ENCODE measurements at regions of chr13 and their contacts with region 1.

Region 1: DNA sequence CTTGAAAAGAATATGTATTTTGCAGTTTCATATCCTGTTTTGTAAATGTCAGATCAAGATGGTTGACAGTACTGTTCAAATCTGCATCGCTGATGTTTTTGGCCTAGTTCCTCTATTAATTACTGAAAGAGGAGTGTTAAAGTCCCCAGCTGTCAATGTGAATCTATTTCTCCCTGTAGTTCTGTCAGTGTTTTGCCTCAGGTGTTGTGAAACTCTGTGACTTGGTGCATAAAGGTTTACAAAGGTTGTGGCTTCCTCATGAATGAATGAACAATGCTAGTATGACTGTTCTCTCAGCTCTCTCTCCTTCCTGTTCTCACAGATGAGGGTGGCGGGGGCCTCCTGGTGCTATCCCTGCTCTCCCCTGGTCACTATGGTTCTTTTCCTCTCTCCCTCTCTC is 142.4 kb downstream of the MYCBP2 start:
- DNase-seq: no peak
- H3K4me3 ChIP-seq: no peak overlapping the region
- H3K4me3 Mint-ChIP-seq: peak overlapping the region in 1 of 8 donors; percentile 1
- H3K27ac ChIP-seq: no peak overlapping the region
- H3K27ac Mint-ChIP-seq: peak overlapping the region in 5 of 7 donors; percentile 16 to 90 (median 71)
- H3K4me1 ChIP-seq: peaks cover 15% of the 10 kb centered on the region
- H3K4me1 Mint-ChIP-seq: peaks cover 11 to 17% (median 14%) of the 10 kb centered on the region in 4 donors
- H3K27me3 ChIP-seq: no peaks in the 10 kb centered on the region
- H3K27me3 Mint-ChIP-seq: no peaks in the 10 kb centered on the region

Region 2: GRCh38 chr13:76735641-76736040 is 448.8 kb before region 1 on chr13:
- CTCF ChIA-PET with region 1: no interaction called
- POLR2A ChIA-PET with region 1: no interaction called
- intact Hi-C with region 1: no loop called
- DNase-seq: no peak
- H3K4me3 ChIP-seq: no peak overlapping the region
- H3K4me3 Mint-ChIP-seq: no peak overlapping the region
- H3K27ac ChIP-seq: no peak overlapping the region
- H3K27ac Mint-ChIP-seq: no peak overlapping the region
- H3K4me1 ChIP-seq: no peaks in the 10 kb centered on the region
- H3K4me1 Mint-ChIP-seq: no peaks in the 10 kb centered on the region
- H3K27me3 ChIP-seq: no peaks in the 10 kb centered on the region
- H3K27me3 Mint-ChIP-seq: peaks cover 0 to 6% of the 10 kb centered on the region in 2 donors

Region 3: DNA sequence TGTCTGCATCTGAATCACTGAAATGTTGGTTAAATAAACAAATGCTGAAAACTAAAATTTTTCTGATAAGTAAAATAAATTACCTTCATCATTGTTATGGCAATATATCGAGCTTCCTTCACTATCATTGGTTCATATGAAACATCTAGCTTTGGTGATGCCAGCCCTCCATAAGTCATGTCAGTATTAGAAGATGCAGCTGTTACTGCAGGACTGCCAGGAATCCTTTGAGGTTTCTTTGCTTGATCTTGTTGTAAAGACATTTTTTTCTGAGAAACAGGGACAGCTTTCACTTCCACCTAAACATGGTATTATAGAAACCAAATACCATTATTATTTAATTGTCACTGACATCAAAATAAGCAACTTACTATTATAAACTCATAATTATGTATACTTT is 33.8 kb before region 1 on chr13:
- CTCF ChIA-PET with region 1: no interaction called
- POLR2A ChIA-PET with region 1: no interaction called
- intact Hi-C with region 1: loop called (anchors 5 kb)
- DNase-seq: no peak
- H3K4me3 ChIP-seq: no peak overlapping the region
- H3K4me3 Mint-ChIP-seq: no peak overlapping the region
- H3K27ac ChIP-seq: no peak overlapping the region
- H3K27ac Mint-ChIP-seq: no peak overlapping the region
- H3K4me1 ChIP-seq: no peaks in the 10 kb centered on the region
- H3K4me1 Mint-ChIP-seq: peaks cover 0 to 7% (median 5%) of the 10 kb centered on the region in 4 donors
- H3K27me3 ChIP-seq: no peaks in the 10 kb centered on the region
- H3K27me3 Mint-ChIP-seq: no peaks in the 10 kb centered on the region

Region 4: DNA sequence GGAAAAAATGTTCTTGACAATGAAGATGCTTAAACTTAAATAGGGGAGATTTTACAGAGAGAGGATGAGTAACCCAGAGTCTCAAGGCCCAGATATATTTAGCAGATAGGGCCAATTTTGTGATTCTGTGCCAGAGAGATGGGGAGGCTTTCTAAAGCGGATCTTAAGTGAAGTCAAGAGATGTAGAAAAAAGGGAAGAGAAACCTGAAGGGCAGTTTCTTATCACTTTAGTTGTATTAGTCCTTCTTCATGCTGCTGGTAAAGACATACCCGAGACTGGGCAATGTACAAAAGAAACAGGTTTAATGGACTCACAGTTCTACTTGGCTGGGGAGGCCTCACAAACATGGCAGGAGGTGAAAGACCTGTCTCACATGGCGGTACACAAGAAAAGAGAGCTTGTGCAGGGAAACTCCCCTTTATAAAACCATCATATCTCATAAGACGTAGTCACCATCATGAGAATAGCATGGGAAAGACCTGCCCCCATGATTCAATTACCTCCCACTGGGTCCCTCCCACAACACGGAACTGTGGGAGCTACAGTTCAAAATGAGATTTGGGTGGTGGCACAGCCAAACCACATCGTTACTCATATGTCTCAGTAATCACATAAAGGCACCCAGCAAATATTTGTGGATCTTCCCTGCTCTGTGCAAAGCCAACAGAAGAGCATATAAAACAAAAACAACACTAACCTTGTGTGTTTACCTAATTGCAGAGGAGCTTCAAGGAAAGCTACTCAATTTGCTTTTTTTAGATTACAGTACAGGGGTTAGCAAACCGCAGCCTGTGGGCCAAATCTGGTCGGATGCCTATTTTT is 245.1 kb after region 1 on chr13:
- CTCF ChIA-PET with region 1: no interaction called
- POLR2A ChIA-PET with region 1: no interaction called
- intact Hi-C with region 1: no loop called
- DNase-seq: no peak
- H3K4me3 ChIP-seq: no peak overlapping the region
- H3K4me3 Mint-ChIP-seq: no peak overlapping the region
- H3K27ac ChIP-seq: no peak overlapping the region
- H3K27ac Mint-ChIP-seq: peak overlapping the region in 1 of 7 donors; percentile 52
- H3K4me1 ChIP-seq: no peaks in the 10 kb centered on the region
- H3K4me1 Mint-ChIP-seq: peaks cover 0 to 1% (median 0%) of the 10 kb centered on the region in 4 donors
- H3K27me3 ChIP-seq: no peaks in the 10 kb centered on the region
- H3K27me3 Mint-ChIP-seq: peaks cover 0 to 1% of the 10 kb centered on the region in 2 donors

Measured in CD4-positive, alpha-beta memory T cell (primary cell).